ENCODE measurements at regions of chr18 and their contacts with region 1.

Region 1: GRCh38 chr18:5424903-5425664 is 118.7 kb downstream of the EPB41L3 start:
- DNase-seq: no peak
- ATAC-seq: no peak
- H3K4me3 ChIP-seq: no peak overlapping the region
- H3K27ac ChIP-seq: no peak overlapping the region
- H3K4me1 ChIP-seq: peaks cover 0 to under 1% (median 0%) of the 10 kb centered on the region in 12 donors
- H3K27me3 ChIP-seq: no peaks in the 10 kb centered on the region
- CTCF ChIP-seq: peak in 8 of 12 donors; percentile 18 to 48 (median 36)
- POLR2A ChIP-seq: no peak

Region 2: DNA sequence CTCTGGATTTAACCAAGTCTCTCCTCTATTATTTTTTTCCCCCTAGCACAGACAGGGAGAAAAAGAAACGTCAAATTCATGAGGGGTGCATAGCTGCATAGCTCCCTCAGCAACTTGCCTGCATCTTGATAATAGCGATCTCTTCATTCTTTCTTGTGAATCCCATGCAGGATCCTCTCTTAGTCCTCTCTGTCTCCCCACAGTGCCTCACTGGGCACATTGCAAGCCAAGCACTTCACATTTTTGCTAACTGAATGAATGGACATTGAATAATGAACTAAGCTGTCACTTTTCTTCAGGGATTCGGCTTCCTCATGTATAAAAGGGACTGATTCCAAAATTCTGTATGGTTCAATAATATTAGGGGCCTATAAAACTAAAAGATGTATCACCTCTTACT is 121.6 kb after region 1 on chr18:
- intact Hi-C with region 1: loop called in 1 of 10 experiments (anchors 10 kb)
- DNase-seq: no peak
- ATAC-seq: peak in 3 of 4 donors; percentile 57 to 76 (median 68)
- H3K4me3 ChIP-seq: no peak overlapping the region
- H3K27ac ChIP-seq: no peak overlapping the region
- H3K4me1 ChIP-seq: peaks cover 0 to 20% (median 0%) of the 10 kb centered on the region in 12 donors
- H3K27me3 ChIP-seq: peaks cover 0 to 21% (median 10%) of the 10 kb centered on the region in 9 donors
- CTCF ChIP-seq: peak in 8 of 12 donors; percentile 19 to 59 (median 36)
- POLR2A ChIP-seq: no peak

Measured in heart left ventricle (tissue), 16 donors.